ENCODE measurements at regions of chr4 and their contacts with region 1.

Region 1: GRCh38 chr4:89110986-89111832 is at the start of gene TIGD2:
- DNase-seq: peak; percentile 93
- total RNA-seq, gene TIGD2: 1.5 TPM

Region 2: GRCh38 chr4:88823058-88823919 is 287.9 kb before region 1 on chr4:
- intact Hi-C with region 1: loop called (anchors 5 kb)
- DNase-seq: peak; percentile 93

Region 3: GRCh38 chr4:89056953-89057398 is 54.2 kb before region 1 on chr4 and contains the start of gene FAM13A:
- intact Hi-C with region 1: loop called (anchors 5 kb)
- DNase-seq: peak; percentile 76
- total RNA-seq, gene FAM13A: 6.6 TPM